ENCODE measurements at regions of chr2 and their contacts with region 1.

Region 1: DNA sequence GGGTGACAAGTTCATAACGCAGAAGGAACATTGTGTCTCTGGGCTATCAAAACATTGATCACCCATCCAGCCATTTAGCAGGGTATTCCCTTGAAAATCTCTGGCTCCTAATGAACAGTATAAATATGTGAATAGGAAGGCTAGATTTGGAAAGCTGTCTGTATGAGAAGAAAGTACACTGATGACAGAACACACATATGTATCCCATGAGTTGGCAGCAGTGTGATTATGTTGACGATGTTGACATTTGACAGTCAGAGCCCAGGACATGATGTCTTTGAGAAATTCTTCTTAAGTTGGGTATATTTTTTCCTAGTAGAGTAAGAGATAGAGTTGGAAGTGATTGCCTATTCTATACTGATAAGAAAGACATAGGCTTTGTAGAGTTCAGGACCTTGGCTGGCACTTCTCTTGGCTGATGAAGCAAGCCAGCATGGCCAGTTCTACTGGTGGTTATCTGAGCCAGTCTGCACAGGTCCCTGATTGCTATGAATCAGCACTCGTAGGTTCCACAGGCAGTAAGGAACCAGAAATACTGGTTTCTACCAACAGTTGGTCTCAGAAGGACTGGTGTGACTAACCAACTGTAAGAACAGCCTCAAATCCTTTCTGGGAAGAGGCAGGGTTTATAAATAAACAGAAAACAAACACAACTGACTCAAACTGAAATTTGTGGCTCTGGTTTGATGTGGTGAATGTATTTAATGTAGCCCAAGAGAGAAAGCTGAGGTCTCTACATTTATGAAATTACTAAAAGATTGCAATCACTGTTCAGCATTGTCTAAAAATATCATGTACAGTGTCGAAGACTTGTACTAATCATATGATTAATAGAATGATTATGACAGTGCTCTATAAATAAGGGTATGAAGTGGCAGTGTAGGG is 43.9 kb upstream of the RAPH1 start:
- DNase-seq: peak; percentile 87
- H3K4me3 Mint-ChIP-seq: peak overlapping the region; percentile 37
- H3K27ac Mint-ChIP-seq: peak overlapping the region; percentile 59
- H3K4me1 Mint-ChIP-seq: peaks cover 28% of the 10 kb centered on the region
- H3K27me3 Mint-ChIP-seq: peaks cover 37% of the 10 kb centered on the region

Region 2: GRCh38 chr2:203535078-203535783 is 43.8 kb before region 1 on chr2 and contains the start of gene RAPH1:
- intact Hi-C with region 1: loop called (anchors 1 kb)
- DNase-seq: peak; percentile 88
- H3K4me3 Mint-ChIP-seq: peak within 1 kb of the TSS; percentile 87
- H3K27ac Mint-ChIP-seq: peak within 1 kb of the TSS; percentile 91
- H3K4me1 Mint-ChIP-seq: peaks cover 28% of the 10 kb centered on the region
- H3K27me3 Mint-ChIP-seq: peaks cover 57% of the 10 kb centered on the region
- total RNA-seq, gene RAPH1: 6.0 and 6.1 TPM in 2 replicates

Region 3: GRCh38 chr2:203623096-203623495 is 44.1 kb after region 1 on chr2:
- intact Hi-C with region 1: no loop called
- DNase-seq: no peak
- H3K4me3 Mint-ChIP-seq: no peak overlapping the region
- H3K27ac Mint-ChIP-seq: no peak overlapping the region
- H3K4me1 Mint-ChIP-seq: peaks cover 4% of the 10 kb centered on the region
- H3K27me3 Mint-ChIP-seq: peaks cover 8% of the 10 kb centered on the region

Region 4: GRCh38 chr2:203637471-203638167 is 58.6 kb after region 1 on chr2:
- intact Hi-C with region 1: loop called (anchors 2 kb)
- DNase-seq: peak; percentile 61
- H3K4me3 Mint-ChIP-seq: peak overlapping the region; percentile 34
- H3K27ac Mint-ChIP-seq: peak overlapping the region; percentile 4
- H3K4me1 Mint-ChIP-seq: peaks cover 21% of the 10 kb centered on the region
- H3K27me3 Mint-ChIP-seq: no peaks in the 10 kb centered on the region

Region 5: GRCh38 chr2:203730076-203730729 is 151.2 kb after region 1 on chr2:
- intact Hi-C with region 1: loop called (anchors 2 kb)
- DNase-seq: peak; percentile 71
- H3K4me3 Mint-ChIP-seq: peak overlapping the region; percentile 71
- H3K27ac Mint-ChIP-seq: peak overlapping the region; percentile 96
- H3K4me1 Mint-ChIP-seq: peaks cover 79% of the 10 kb centered on the region
- H3K27me3 Mint-ChIP-seq: no peaks in the 10 kb centered on the region

Region 6: DNA sequence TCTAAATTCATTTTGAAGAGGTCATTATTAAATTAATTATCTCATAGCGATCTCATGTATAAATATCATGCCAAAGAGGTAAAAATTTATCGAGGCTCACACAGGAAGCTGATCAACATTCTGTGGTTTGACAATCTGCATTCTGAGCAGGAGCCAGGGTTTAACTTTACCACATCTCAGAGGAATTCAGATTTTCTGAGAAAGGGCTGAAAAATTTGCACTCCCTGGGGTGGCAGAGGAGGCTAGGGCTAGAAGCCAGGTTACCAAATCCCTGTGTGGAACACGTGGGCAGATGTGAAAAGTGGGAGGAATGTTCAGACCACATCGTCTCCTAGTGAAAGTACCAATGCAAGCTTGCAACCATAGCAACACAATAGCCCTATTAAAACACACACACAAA is 225.1 kb after region 1 on chr2:
- intact Hi-C with region 1: loop called (anchors 1 kb)
- DNase-seq: peak; percentile 82
- H3K4me3 Mint-ChIP-seq: peak overlapping the region; percentile 40
- H3K27ac Mint-ChIP-seq: peak overlapping the region; percentile 84
- H3K4me1 Mint-ChIP-seq: peaks cover 60% of the 10 kb centered on the region
- H3K27me3 Mint-ChIP-seq: no peaks in the 10 kb centered on the region

Region 7: GRCh38 chr2:203858176-203858575 is 279.2 kb after region 1 on chr2:
- intact Hi-C with region 1: no loop called
- DNase-seq: peak; percentile 72
- H3K4me3 Mint-ChIP-seq: no peak overlapping the region
- H3K27ac Mint-ChIP-seq: peak overlapping the region; percentile 55
- H3K4me1 Mint-ChIP-seq: peaks cover 64% of the 10 kb centered on the region
- H3K27me3 Mint-ChIP-seq: no peaks in the 10 kb centered on the region

Measured in activated CD4-positive, alpha-beta T cell treated with anti-CD3 and anti-CD28 coated beads, Interleukin-2, amount 10 ng/mL, durations not matched to agents 24 days and 14 days (primary cell).